A673 (cell line): ENCODE measurements at regions of chr19 and their contacts with region 1.

Region 1: GRCh38 chr19:1066408-1067340 is at the start of gene ARHGAP45:
- DNase-seq: no peak
- H3K4me3 ChIP-seq: peak within 1 kb of the TSS; percentile 51
- H3K27ac ChIP-seq: no peak within 1 kb of the TSS
- H3K4me1 ChIP-seq: peaks cover 26% of the 10 kb centered on the region
- H3K27me3 ChIP-seq: peaks cover 7% of the 10 kb centered on the region
- CTCF ChIP-seq: no peak
- total RNA-seq, gene ARHGAP45: 3.2 and 3.4 TPM in 2 replicates

Region 2: DNA sequence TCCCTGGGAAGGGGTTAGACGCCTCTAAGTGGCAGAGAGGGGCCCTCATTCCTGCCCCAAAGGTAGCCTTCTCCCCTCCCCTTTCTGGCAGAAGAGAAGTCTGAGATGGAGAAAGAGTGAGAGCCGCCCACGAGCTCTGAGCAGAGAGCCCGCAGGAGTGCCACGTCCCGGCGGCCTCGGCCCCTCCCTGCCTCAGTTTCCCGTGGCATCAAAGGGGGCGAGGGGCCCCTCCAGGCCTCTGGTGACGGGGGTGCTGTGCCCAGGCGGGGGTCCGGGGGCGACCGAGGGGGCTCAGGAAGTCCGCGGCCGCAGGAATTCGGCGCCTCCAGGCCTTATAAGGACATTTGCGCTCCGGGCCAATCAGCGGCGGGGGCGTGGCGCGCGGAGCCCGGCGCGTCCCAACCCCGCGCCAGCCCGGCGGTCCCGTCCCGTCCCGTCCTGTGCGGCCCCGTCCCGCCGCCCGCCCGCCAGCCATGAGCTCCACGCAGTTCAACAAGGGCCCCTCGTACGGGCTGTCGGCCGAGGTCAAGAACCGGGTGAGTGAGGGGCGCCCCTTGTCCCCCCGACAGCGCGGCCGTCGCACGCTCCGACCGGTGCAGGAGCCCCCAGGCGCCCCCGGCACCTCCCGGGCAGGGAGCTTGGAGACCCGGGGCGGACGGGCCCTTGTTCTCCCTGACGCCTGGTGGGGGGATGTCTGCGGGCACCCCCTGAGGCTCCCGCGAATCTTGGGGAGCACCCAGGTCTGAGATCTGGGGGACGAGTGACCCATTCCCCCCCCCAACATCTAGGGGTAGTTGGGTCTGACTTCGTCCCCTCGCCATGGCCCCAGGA is 40.3 kb before region 1 on chr19 and contains the start of gene CNN2:
- CTCF ChIA-PET with region 1: no interaction called
- POLR2A ChIA-PET with region 1: no interaction called
- intact Hi-C with region 1: no loop called
- DNase-seq: peak; percentile 87
- H3K4me3 ChIP-seq: peak within 1 kb of the TSS; percentile 92
- H3K27ac ChIP-seq: peak within 1 kb of the TSS; percentile 99
- H3K4me1 ChIP-seq: no peaks in the 10 kb centered on the region
- H3K27me3 ChIP-seq: no peaks in the 10 kb centered on the region
- CTCF ChIP-seq: no peak
- total RNA-seq, gene CNN2: 112 and 146 TPM in 2 replicates

Region 3: DNA sequence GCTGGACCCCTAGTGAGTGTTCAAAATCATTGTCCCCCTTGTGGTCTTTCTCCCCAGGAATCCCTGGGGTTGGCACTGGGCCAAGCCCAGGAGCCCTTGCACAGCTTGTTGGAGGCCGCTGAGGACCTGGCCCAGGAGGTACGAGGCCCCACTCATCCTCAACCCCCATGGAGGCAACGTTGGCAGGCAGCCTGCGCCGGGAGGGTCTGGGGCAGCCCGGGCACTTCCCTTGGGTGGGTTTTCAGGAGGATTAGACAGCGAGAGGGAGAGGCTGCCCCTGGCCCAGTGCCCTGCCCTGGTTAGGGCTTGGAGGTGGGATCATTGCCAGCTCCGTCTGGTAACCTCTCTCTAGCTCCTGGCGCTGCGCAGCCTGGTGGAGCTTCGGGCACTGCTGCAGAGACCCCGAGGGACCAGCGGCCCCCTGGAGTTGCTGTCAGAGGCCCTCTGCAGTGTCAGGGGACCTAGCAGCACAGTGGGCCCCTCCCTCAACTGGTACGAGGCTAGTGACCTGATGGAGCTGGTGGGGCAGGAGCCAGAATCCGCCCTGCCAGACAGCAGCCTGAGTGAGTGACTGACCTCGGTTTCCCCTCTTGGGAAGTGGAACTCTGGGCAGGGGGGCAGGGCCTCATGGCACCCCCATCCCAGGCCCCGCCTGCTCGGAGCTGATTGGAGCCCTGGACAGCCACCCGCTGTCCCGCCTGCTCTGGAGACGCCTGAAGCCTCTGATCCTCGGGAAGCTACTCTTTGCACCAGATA is 23.8 kb before region 1 on chr19:
- CTCF ChIA-PET with region 1: interaction called, 5 read pairs
- POLR2A ChIA-PET with region 1: interaction called, 13 read pairs
- intact Hi-C with region 1: no loop called
- DNase-seq: peak; percentile 57
- H3K4me3 ChIP-seq: peak overlapping the region; percentile 54
- H3K27ac ChIP-seq: peak overlapping the region; percentile 73
- H3K4me1 ChIP-seq: peaks cover 31% of the 10 kb centered on the region
- H3K27me3 ChIP-seq: no peaks in the 10 kb centered on the region
- CTCF ChIP-seq: no peak

Region 4: DNA sequence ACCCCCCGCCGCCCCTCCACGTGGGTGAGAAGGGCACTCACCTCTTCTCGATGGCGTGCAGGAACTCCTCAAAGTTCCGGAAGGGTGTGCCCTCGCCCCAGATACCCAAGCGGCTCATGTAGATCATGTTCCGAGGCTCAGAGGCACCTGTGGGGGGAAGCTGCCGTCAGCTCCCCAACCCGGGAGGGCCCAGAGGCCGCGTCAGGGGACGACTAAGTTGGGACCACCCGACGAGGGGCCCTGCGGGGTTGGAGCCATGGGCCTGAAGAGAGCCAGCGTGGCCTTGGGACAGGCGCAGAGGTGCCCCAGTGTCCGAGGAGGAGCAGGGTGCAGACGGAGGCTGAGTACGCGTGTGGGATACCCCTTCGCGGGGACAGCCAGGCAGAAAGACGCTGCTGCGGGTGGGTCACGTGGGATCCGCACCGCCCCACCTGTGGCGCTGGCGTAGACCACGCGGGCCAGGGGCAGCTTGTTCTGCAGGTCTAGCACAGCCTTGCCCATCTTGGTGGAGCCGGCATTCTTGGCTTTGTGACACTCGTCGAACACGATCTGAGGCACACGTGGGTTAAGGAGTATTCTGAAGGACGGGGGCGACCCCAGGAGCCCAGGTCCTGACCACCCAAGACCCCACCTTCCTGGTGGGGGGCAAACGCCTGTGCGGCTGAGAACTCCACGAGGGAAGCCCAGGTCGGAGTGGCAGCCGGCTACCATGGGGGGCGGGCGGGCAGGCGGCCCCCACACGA is 53.0 kb after region 1 on chr19:
- CTCF ChIA-PET with region 1: no interaction called
- POLR2A ChIA-PET with region 1: no interaction called
- intact Hi-C with region 1: no loop called
- DNase-seq: no peak
- H3K4me3 ChIP-seq: no peak overlapping the region
- H3K27ac ChIP-seq: no peak overlapping the region
- H3K4me1 ChIP-seq: no peaks in the 10 kb centered on the region
- H3K27me3 ChIP-seq: no peaks in the 10 kb centered on the region
- CTCF ChIP-seq: no peak

Region 5: GRCh38 chr19:1161716-1162115 is 95.0 kb after region 1 on chr19:
- CTCF ChIA-PET with region 1: no interaction called
- POLR2A ChIA-PET with region 1: no interaction called
- intact Hi-C with region 1: no loop called
- DNase-seq: no peak
- H3K4me3 ChIP-seq: no peak overlapping the region
- H3K27ac ChIP-seq: no peak overlapping the region
- H3K4me1 ChIP-seq: no peaks in the 10 kb centered on the region
- H3K27me3 ChIP-seq: no peaks in the 10 kb centered on the region
- CTCF ChIP-seq: no peak